GM12878 (cell line): ENCODE measurements at regions of chr3 and their contacts with region 1.

Region 1: GRCh38 chr3:48400824-48401433 is 28.9 kb downstream of the FBXW12 start:
- DNase-seq: peak; percentile 26
- ATAC-seq: peak; percentile 92
- H3K4me3 ChIP-seq: no peak overlapping the region
- H3K27ac ChIP-seq: no peak overlapping the region
- H3K4me1 ChIP-seq: no peaks in the 10 kb centered on the region
- H3K27me3 ChIP-seq: no peaks in the 10 kb centered on the region
- CTCF ChIP-seq: peak; percentile 71 to 90 (median 80); a peak in 5 of 6 replicates
- EP300 ChIP-seq: no peak
- POLR2A ChIP-seq: no peak
- RAD21 ChIP-seq: peak; percentile 93

Region 2: DNA sequence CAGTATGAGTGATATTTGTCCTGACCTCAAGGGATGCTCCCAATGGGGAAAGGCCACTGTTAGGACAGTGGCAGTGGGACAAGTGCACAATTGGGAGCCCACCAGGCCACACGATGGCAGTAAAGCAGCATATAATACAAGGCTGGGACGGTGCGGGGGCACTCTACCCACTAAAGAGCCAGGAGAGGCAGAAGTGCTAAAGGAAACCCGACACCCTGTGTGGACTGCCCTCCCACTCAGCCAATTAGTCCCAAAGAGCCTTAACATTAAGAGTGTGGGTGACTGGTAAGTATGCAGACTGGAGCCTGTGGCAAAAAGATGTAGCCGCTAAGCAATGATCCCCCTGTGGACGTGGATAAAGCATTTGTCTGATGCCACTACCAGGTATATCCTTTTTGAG is 168.2 kb before region 1 on chr3:
- CTCF ChIA-PET with region 1: interaction called, 47 read pairs
- POLR2A ChIA-PET with region 1: interaction called, 3 read pairs
- RAD21 ChIA-PET with region 1: interaction called, 5 read pairs
- SMC1A ChIA-PET with region 1: interaction called, 13 read pairs
- in situ Hi-C with region 1: no loop called
- intact Hi-C with region 1: loop called (anchors 2 kb)
- DNase-seq: peak; percentile 63
- ATAC-seq: peak; percentile 100
- H3K4me3 ChIP-seq: peak overlapping the region; percentile 6; the same call in 1 of the 2 replicates
- H3K27ac ChIP-seq: peak overlapping the region; percentile 24; the same call in 1 of the 2 replicates
- H3K4me1 ChIP-seq: peaks cover 39% of the 10 kb centered on the region
- H3K27me3 ChIP-seq: no peaks in the 10 kb centered on the region
- CTCF ChIP-seq: peak; percentile 63 to 90 (median 85)
- EP300 ChIP-seq: no peak
- POLR2A ChIP-seq: no peak
- RAD21 ChIP-seq: peak; percentile 68

Region 3: DNA sequence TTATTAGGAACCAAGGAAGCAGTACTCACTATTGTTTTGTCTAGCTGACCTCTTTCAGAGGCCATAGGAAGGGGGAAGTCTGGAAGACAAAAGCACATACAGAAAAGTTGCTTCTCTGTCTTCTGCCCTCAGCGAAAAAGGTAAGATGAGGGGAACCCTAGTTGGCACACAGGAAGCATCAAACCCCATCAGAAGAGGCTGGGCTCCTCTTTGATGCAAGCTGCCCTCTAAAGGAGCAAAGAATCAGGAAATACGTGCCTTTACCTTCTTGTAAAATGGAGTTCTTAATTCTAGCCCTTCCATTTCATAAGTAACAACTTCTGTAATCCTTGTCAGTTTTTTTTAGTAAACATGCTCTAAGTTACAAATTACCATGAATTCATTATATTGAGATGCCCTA is 79.9 kb before region 1 on chr3:
- CTCF ChIA-PET with region 1: interaction called, 11 read pairs
- POLR2A ChIA-PET with region 1: no interaction called
- RAD21 ChIA-PET with region 1: no interaction called
- SMC1A ChIA-PET with region 1: interaction called, 3 read pairs
- in situ Hi-C with region 1: no loop called
- intact Hi-C with region 1: no loop called
- DNase-seq: no peak
- ATAC-seq: no peak
- H3K4me3 ChIP-seq: no peak overlapping the region
- H3K27ac ChIP-seq: no peak overlapping the region
- H3K4me1 ChIP-seq: no peaks in the 10 kb centered on the region
- H3K27me3 ChIP-seq: no peaks in the 10 kb centered on the region
- CTCF ChIP-seq: no peak
- EP300 ChIP-seq: no peak
- POLR2A ChIP-seq: no peak
- RAD21 ChIP-seq: no peak

Region 4: DNA sequence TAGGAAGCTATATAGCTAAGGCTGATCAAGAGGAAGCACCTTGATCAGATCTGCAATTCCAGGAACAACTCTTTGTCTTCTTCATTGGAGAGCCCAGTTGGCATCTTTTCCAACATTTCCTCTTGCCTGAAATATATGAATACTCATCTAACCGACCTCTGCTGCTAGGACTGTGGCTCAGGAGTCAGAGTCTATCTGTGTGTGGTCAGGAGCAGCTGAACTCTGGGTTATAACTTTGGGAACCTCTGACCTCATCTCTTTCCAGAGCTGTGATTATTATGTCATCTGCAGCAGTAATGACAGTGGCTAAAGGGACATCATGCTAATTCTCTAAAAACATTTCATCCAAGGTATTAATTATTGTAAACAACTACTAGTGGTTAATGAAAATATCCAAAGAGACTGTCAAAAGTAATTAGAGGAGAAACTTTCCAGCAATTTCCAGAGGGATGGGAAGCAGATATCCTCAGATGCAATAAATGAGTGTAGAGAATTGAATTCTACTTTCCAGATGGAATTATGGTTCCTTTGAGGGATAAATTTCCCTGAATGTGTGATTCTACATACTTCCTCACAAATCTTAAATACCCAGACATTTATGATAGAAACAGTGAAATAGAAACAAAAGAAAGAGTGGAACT is 55.9 kb before region 1 on chr3:
- CTCF ChIA-PET with region 1: no interaction called
- POLR2A ChIA-PET with region 1: no interaction called
- RAD21 ChIA-PET with region 1: no interaction called
- SMC1A ChIA-PET with region 1: no interaction called
- in situ Hi-C with region 1: no loop called
- intact Hi-C with region 1: no loop called
- DNase-seq: no peak
- ATAC-seq: no peak
- H3K4me3 ChIP-seq: no peak overlapping the region
- H3K27ac ChIP-seq: no peak overlapping the region
- H3K4me1 ChIP-seq: no peaks in the 10 kb centered on the region
- H3K27me3 ChIP-seq: no peaks in the 10 kb centered on the region; a peak in 1 of 4 replicates
- CTCF ChIP-seq: no peak
- EP300 ChIP-seq: no peak
- POLR2A ChIP-seq: no peak
- RAD21 ChIP-seq: no peak

Region 5: GRCh38 chr3:48432411-48433372 is 31.8 kb after region 1 on chr3:
- CTCF ChIA-PET with region 1: interaction called, 757 read pairs
- POLR2A ChIA-PET with region 1: interaction called, 11 read pairs
- RAD21 ChIA-PET with region 1: interaction called, 259 read pairs
- SMC1A ChIA-PET with region 1: interaction called, 287 read pairs
- in situ Hi-C with region 1: loop called (anchors 5 kb)
- intact Hi-C with region 1: loop called (anchors 1 kb)
- DNase-seq: no peak
- ATAC-seq: peak; percentile 2; the same call in 1 of the 3 replicates
- H3K4me3 ChIP-seq: no peak overlapping the region
- H3K27ac ChIP-seq: peak overlapping the region; percentile 54
- H3K4me1 ChIP-seq: peaks cover 19% of the 10 kb centered on the region
- H3K27me3 ChIP-seq: no peaks in the 10 kb centered on the region
- CTCF ChIP-seq: peak in 2 of 3 experiments; percentile 18; a peak in 3 of 6 replicates
- EP300 ChIP-seq: no peak
- POLR2A ChIP-seq: no peak
- RAD21 ChIP-seq: no peak

Region 6: GRCh38 chr3:48507351-48508061 is 106.6 kb after region 1 on chr3:
- CTCF ChIA-PET with region 1: interaction called, 24 read pairs
- POLR2A ChIA-PET with region 1: no interaction called
- RAD21 ChIA-PET with region 1: interaction called, 7 read pairs
- SMC1A ChIA-PET with region 1: interaction called, 12 read pairs
- in situ Hi-C with region 1: no loop called
- intact Hi-C with region 1: loop called (anchors 1 kb)
- DNase-seq: no peak
- ATAC-seq: peak; percentile 90
- H3K4me3 ChIP-seq: no peak overlapping the region
- H3K27ac ChIP-seq: no peak overlapping the region
- H3K4me1 ChIP-seq: peaks cover 6% of the 10 kb centered on the region
- H3K27me3 ChIP-seq: no peaks in the 10 kb centered on the region
- CTCF ChIP-seq: peak; percentile 80 to 83 (median 81); a peak in 5 of 6 replicates
- EP300 ChIP-seq: no peak
- POLR2A ChIP-seq: no peak
- RAD21 ChIP-seq: peak; percentile 91

Region 7: GRCh38 chr3:48581621-48582481 is 180.9 kb after region 1 on chr3:
- CTCF ChIA-PET with region 1: no interaction called
- POLR2A ChIA-PET with region 1: no interaction called
- RAD21 ChIA-PET with region 1: no interaction called
- SMC1A ChIA-PET with region 1: no interaction called
- in situ Hi-C with region 1: no loop called
- intact Hi-C with region 1: no loop called
- DNase-seq: no peak
- ATAC-seq: no peak
- H3K4me3 ChIP-seq: no peak overlapping the region
- H3K27ac ChIP-seq: no peak overlapping the region
- H3K4me1 ChIP-seq: no peaks in the 10 kb centered on the region
- H3K27me3 ChIP-seq: no peaks in the 10 kb centered on the region; a peak in 1 of 4 replicates
- CTCF ChIP-seq: no peak
- EP300 ChIP-seq: no peak
- POLR2A ChIP-seq: no peak
- RAD21 ChIP-seq: no peak

Region 8: GRCh38 chr3:48609088-48610005 is 208.4 kb after region 1 on chr3 and contains the start of gene UQCRC1:
- CTCF ChIA-PET with region 1: interaction called, 12 read pairs
- POLR2A ChIA-PET with region 1: no interaction called
- RAD21 ChIA-PET with region 1: interaction called, 4 read pairs
- SMC1A ChIA-PET with region 1: no interaction called
- in situ Hi-C with region 1: no loop called
- intact Hi-C with region 1: no loop called
- DNase-seq: peak; percentile 78
- ATAC-seq: peak; percentile 100
- H3K4me3 ChIP-seq: peak within 1 kb of the TSS; percentile 78
- H3K27ac ChIP-seq: peak within 1 kb of the TSS; percentile 85
- H3K4me1 ChIP-seq: peaks cover 9% of the 10 kb centered on the region
- H3K27me3 ChIP-seq: no peaks in the 10 kb centered on the region
- CTCF ChIP-seq: peak; percentile 60 to 89 (median 80)
- EP300 ChIP-seq: no peak; a peak in 1 of 4 replicates
- POLR2A ChIP-seq: peak; percentile 100
- RAD21 ChIP-seq: no peak
- polyA plus RNA-seq, gene UQCRC1: 116 to 188 TPM

Region 9: GRCh38 chr3:48674505-48674904 is 273.6 kb after region 1 on chr3:
- CTCF ChIA-PET with region 1: no interaction called
- POLR2A ChIA-PET with region 1: no interaction called
- RAD21 ChIA-PET with region 1: no interaction called
- SMC1A ChIA-PET with region 1: no interaction called
- in situ Hi-C with region 1: no loop called
- intact Hi-C with region 1: no loop called
- DNase-seq: no peak
- ATAC-seq: no peak
- H3K4me3 ChIP-seq: no peak overlapping the region
- H3K27ac ChIP-seq: no peak overlapping the region
- H3K4me1 ChIP-seq: no peaks in the 10 kb centered on the region
- H3K27me3 ChIP-seq: no peaks in the 10 kb centered on the region
- CTCF ChIP-seq: no peak
- EP300 ChIP-seq: no peak
- POLR2A ChIP-seq: no peak; the same call in 1 of the 2 replicates
- RAD21 ChIP-seq: no peak

Region 10: GRCh38 chr3:50381383-50381782 is 1980.5 kb after region 1 on chr3:
- CTCF ChIA-PET with region 1: no interaction called
- POLR2A ChIA-PET with region 1: no interaction called
- RAD21 ChIA-PET with region 1: no interaction called
- SMC1A ChIA-PET with region 1: no interaction called
- in situ Hi-C with region 1: no loop called
- intact Hi-C with region 1: no loop called
- DNase-seq: no peak
- ATAC-seq: no peak
- H3K4me3 ChIP-seq: no peak overlapping the region
- H3K27ac ChIP-seq: no peak overlapping the region
- H3K4me1 ChIP-seq: no peaks in the 10 kb centered on the region
- H3K27me3 ChIP-seq: no peaks in the 10 kb centered on the region
- CTCF ChIP-seq: no peak
- EP300 ChIP-seq: no peak
- POLR2A ChIP-seq: no peak
- RAD21 ChIP-seq: no peak